GM13976 (cell line): ENCODE measurements at regions of chr17 and their contacts with region 1.

Region 1: GRCh38 chr17:28433721-28434120 is 27.7 kb upstream of the SLC46A1 start:
- DNase-seq: no peak
- CTCF ChIP-seq: no peak

Region 2: DNA sequence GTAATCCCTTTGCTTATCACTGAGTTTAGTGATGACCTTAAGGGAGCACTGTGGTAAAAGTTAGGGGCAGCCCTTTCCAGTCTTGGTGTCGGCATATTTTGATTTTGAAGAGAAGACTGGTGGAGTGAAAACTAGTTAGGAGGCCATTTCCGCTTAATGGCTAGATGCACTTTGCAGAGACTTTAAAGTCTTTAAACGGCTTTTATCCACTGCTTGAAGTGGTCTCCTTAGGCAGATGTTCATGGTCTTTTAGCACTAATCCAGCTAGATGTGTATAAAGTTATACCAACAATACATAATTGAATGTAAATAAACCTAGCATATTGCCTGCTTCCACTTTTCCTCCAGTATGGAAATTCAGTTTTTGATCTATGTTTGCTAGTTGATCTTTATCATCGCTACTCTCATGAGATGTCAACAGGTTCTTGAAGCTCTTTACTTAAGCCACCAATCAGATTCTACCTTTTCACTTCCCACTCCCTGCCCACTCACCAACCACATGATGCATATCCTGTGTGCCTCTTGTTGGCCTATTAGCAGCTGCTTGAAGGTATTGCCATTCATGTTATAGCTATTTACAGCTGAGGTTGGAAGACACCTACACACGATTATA is 259.3 kb before region 1 on chr17:
- in situ Hi-C with region 1: no loop called
- DNase-seq: peak; percentile 36
- CTCF ChIP-seq: no peak

Region 3: GRCh38 chr17:28335201-28335955 is 98.3 kb before region 1 on chr17 and contains the starts of genes IFT20 and TNFAIP1:
- in situ Hi-C with region 1: no loop called
- DNase-seq: peak; percentile 98
- CTCF ChIP-seq: no peak

Region 4: DNA sequence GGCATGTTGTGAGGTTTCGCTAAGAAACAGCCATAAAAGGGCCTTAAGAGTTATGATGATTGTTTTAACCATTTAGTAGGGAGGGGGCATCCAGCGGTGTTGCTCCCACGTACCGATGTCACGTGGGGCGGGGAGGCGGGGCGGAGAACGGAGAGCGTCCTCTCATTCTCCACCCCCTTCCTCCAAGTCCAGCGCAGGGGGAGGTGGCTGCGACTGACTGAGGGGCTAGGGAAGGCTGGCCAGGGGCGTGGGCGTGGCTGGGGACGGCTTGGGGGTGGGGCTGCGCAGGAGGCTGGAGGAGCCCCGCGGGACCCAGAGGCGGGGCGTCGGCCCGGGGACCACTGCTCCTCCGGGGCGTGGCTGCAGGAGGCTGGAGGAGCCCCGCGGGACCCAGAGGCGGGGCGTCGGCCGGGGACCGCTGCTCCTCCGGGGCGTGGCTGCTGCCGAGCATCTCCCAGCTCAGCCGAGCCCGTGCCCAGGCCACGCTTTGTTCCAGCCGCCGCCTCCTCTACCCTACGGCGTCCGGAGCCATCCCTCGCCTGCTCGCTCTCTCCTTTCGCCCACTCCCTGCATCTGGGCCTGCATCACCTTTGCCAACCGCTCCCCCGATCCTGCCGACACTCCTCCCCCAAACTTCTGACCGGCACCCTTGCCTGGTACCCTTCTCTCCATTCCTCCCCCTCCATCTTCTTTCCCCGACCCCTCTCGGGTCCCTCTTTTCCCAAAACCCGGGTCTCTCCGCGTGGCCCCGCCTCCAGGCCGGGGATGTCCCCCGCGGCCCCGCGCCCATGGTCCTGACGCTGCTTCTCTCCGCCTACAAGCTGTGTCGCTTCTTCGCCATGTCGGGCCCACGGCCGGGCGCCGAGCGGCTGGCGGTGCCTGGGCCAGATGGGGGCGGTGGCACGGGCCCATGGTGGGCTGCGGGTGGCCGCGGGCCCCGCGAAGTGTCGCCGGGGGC is 62.2 kb before region 1 on chr17 and contains the start of gene SARM1:
- in situ Hi-C with region 1: loop called (anchors 10 kb)
- DNase-seq: peak; percentile 96
- CTCF ChIP-seq: no peak